ENCODE measurements at regions of chr2 and their contacts with region 1.

Region 1: GRCh38 chr2:227789803-227790202 is 23.8 kb upstream of the CCL20 start:
- DNase-seq: no peak
- ATAC-seq: peak; percentile 92
- H3K4me3 ChIP-seq: no peak overlapping the region
- H3K27ac ChIP-seq: no peak overlapping the region
- H3K4me1 ChIP-seq: no peaks in the 10 kb centered on the region
- H3K27me3 ChIP-seq: no peaks in the 10 kb centered on the region
- CTCF ChIP-seq: no peak
- EP300 ChIP-seq: peak in 1 of 2 experiments; percentile 17; a peak in 1 of 4 replicates
- POLR2A ChIP-seq: no peak
- RAD21 ChIP-seq: no peak

Region 2: GRCh38 chr2:227805578-227805977 is 15.8 kb after region 1 on chr2:
- CTCF ChIA-PET with region 1: interaction called, 4 read pairs
- POLR2A ChIA-PET with region 1: interaction called, 58 read pairs
- RAD21 ChIA-PET with region 1: interaction called, 52 read pairs
- SMC1A ChIA-PET with region 1: interaction called, 120 read pairs
- in situ Hi-C with region 1: no loop called
- intact Hi-C with region 1: loop called (anchors 2 kb)
- DNase-seq: peak; percentile 45
- ATAC-seq: peak; percentile 77
- H3K4me3 ChIP-seq: no peak overlapping the region
- H3K27ac ChIP-seq: peak overlapping the region; percentile 52
- H3K4me1 ChIP-seq: peaks cover 3% of the 10 kb centered on the region; the same call in 1 of the 2 replicates
- H3K27me3 ChIP-seq: no peaks in the 10 kb centered on the region
- CTCF ChIP-seq: no peak
- EP300 ChIP-seq: no peak
- POLR2A ChIP-seq: no peak
- RAD21 ChIP-seq: no peak

Region 3: DNA sequence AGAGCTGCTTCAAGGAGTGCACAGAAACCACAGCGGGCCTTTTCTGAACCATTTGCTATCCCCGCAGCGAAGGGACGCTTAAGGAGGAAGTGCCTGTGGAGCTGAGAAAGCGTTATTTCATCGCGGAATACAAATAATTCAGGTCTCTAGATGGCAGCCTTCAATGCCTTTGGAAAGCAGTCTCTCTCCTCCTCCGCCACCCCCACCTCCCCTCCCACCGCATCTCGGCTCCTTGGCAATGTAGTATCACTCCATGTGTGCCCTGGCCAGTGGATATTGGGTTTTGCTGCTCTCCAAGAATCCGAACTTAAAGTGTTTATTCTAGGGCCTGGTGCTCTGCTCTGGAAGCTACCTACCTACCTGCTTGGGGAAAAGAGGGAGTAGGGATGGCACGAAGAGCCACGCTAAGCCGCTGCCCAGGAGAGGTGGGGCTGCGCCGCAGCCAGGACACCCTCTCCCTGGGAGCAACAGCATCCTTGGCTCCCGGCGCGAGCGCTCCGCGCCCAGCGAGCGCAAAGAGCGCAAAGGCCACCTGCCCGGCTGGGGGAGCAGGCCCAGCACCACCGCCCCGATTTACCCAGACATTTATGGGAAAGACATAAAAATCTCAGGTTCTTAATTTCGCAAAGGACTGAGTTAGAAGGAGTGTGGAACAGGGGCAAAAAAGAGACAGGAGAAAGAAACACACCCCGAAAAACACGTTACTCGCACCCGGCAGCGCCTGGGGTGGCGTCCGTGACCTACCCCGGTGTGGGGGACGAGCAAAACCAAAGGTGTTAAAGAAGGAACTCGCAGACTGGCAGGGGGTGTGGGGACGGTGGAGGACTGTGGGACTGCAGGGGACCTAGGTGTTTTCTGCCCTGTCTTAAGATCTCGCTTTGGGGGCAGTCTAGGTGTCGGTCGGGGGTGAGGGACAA is 390.6 kb after region 1 on chr2:
- CTCF ChIA-PET with region 1: no interaction called
- POLR2A ChIA-PET with region 1: no interaction called
- RAD21 ChIA-PET with region 1: no interaction called
- SMC1A ChIA-PET with region 1: no interaction called
- in situ Hi-C with region 1: no loop called
- intact Hi-C with region 1: no loop called
- DNase-seq: no peak
- ATAC-seq: no peak
- H3K4me3 ChIP-seq: no peak overlapping the region
- H3K27ac ChIP-seq: no peak overlapping the region
- H3K4me1 ChIP-seq: no peaks in the 10 kb centered on the region
- H3K27me3 ChIP-seq: no peaks in the 10 kb centered on the region; a peak in 1 of 4 replicates
- CTCF ChIP-seq: no peak
- EP300 ChIP-seq: no peak
- POLR2A ChIP-seq: no peak
- RAD21 ChIP-seq: no peak

Measured in GM12878 (cell line).